AG04450 (cell line): ENCODE measurements at regions of chr2 and their contacts with region 1.

Region 1: GRCh38 chr2:69933839-69934613 is 19.1 kb downstream of the MXD1 start:
- DNase-seq: peak; percentile 47
- H3K4me3 ChIP-seq: peak overlapping the region; percentile 34
- H3K27ac ChIP-seq: peak overlapping the region; percentile 88
- H3K27me3 ChIP-seq: no peaks in the 10 kb centered on the region
- CTCF ChIP-seq: no peak

Region 2: DNA sequence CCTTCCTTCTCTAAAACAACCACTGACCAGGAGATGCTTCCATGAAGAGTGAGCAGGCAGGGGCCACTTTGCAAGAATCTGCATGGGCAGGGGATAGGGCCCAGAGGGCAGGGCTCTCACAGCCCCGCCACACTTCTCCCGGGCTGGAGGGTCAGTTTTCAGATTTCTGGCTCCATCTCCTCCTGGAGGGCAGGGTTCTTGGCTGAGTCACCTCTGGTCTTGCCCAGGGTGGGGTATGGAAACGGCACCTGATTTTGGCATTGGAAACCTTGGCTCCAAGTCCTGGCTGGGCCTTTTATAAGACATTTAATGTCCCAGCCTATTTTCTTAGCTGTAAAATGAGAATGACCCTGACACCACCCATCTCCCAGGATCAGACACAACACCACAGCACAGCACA is 55.0 kb after region 1 on chr2:
- CTCF ChIA-PET with region 1: no interaction called
- POLR2A ChIA-PET with region 1: no interaction called
- DNase-seq: no peak
- H3K4me3 ChIP-seq: no peak overlapping the region
- H3K27ac ChIP-seq: no peak overlapping the region
- H3K27me3 ChIP-seq: no peaks in the 10 kb centered on the region
- CTCF ChIP-seq: no peak

Region 3: GRCh38 chr2:70233926-70234325 is 299.9 kb after region 1 on chr2:
- CTCF ChIA-PET with region 1: interaction called, 11 read pairs
- POLR2A ChIA-PET with region 1: no interaction called
- DNase-seq: no peak
- H3K4me3 ChIP-seq: no peak overlapping the region
- H3K27ac ChIP-seq: no peak overlapping the region
- H3K27me3 ChIP-seq: no peaks in the 10 kb centered on the region
- CTCF ChIP-seq: no peak